ENCODE measurements at regions of chr1 and their contacts with region 1.

Region 1: DNA sequence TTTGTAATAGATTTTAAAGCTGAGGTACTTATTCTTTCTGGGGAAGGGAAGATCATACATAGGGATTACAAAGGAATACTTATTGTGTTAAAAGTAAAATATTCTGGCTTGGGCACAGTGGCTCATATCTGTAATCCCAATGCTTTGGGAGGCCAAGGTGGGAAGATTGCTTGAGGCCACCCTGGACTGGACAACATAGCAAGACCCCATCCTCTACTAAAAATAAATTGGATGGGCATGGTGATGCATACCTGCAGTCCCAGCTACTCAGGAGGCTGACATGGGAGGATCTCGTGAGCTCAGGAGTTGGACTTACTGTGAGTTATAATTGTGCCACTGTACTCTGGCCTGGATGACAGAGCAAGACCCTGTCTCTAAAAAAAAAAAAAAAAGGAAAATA is 27.6 kb downstream of the GABPB2 start:
- DNase-seq: no peak
- ATAC-seq: no peak
- H3K4me3 ChIP-seq: no peak overlapping the region
- H3K27ac ChIP-seq: no peak overlapping the region
- H3K4me1 ChIP-seq: no peaks in the 10 kb centered on the region
- H3K27me3 ChIP-seq: no peaks in the 10 kb centered on the region
- CTCF ChIP-seq: no peak
- POLR2A ChIP-seq: no peak

Region 2: GRCh38 chr1:151085953-151086559 is 12.1 kb before region 1 on chr1:
- in situ Hi-C with region 1: no loop called
- intact Hi-C with region 1: no loop called
- DNase-seq: no peak
- ATAC-seq: no peak
- H3K4me3 ChIP-seq: no peak overlapping the region
- H3K27ac ChIP-seq: no peak overlapping the region
- H3K4me1 ChIP-seq: no peaks in the 10 kb centered on the region
- H3K27me3 ChIP-seq: no peaks in the 10 kb centered on the region
- CTCF ChIP-seq: no peak
- POLR2A ChIP-seq: no peak

Region 3: DNA sequence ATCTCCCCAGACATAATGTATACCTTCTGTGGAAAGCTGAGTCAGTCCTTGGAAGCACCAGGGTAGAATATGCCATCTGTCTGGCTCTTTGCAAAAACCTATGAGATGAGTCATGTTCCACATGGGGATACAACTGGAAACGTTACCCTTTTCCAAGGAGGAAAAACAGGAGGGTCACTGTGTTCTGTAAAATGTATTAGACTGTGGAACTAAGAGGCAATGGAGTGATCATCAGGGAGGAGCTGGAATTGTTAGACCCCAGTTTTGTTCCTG is 140.3 kb after region 1 on chr1:
- in situ Hi-C with region 1: no loop called
- intact Hi-C with region 1: loop called (anchors 10 kb)
- DNase-seq: peak; percentile 34 to 53
- ATAC-seq: peak; percentile 98 to 99
- H3K4me3 ChIP-seq: no peak overlapping the region
- H3K27ac ChIP-seq: peak overlapping the region; percentile 75 to 86 (median 80)
- H3K4me1 ChIP-seq: peaks cover 6 to 17% of the 10 kb centered on the region in 2 donors
- H3K27me3 ChIP-seq: no peaks in the 10 kb centered on the region
- CTCF ChIP-seq: no peak
- POLR2A ChIP-seq: no peak

Region 4: GRCh38 chr1:151710187-151710840 is 612.2 kb after region 1 on chr1:
- in situ Hi-C with region 1: no loop called
- intact Hi-C with region 1: no loop called
- DNase-seq: no peak
- ATAC-seq: no peak
- H3K4me3 ChIP-seq: no peak overlapping the region
- H3K27ac ChIP-seq: no peak overlapping the region
- H3K4me1 ChIP-seq: no peaks in the 10 kb centered on the region
- H3K27me3 ChIP-seq: no peaks in the 10 kb centered on the region
- CTCF ChIP-seq: no peak
- POLR2A ChIP-seq: no peak

Measured in gastrocnemius medialis (tissue), 4 donors.